Activated naive CD4-positive, alpha-beta T cell treated with anti-CD3 and anti-CD28 coated beads, Interleukin-2, amount 10 ng/mL, durations not matched to agents 7 days and 5 days (primary cell): ENCODE measurements at regions of chr9 and their contacts with region 1.

Region 1: DNA sequence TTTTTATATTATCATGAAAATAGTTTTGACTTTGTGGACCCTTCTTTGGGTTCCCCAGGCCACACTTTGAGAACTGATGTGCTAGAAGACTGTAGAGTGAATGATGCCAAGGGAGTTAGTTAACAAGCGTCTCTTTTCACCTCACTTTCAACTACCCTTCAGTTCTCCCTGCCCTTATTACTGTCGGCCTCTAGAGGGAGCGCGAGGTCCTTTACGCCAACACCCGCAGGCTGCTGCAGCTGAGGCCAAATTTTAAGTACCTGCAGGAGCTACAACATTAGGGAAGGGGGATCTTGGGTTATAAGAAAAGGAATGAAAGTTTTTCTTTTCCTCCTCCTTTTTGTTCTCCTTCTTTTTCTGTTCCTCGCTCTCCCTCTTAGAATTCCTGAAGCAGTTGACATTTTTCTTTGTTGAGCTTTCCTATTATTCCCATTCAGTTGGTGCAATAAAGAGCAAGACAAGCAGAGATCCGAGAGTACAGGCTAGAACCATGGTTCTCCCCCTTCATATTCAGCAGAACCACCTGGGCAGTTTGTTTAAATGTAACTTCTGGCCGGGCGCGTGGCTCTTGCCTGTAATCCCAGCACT is 84.0 kb downstream of the ZFAND5 start:
- DNase-seq: peak; percentile 77
- H3K4me3 Mint-ChIP-seq: no peak overlapping the region
- H3K27ac Mint-ChIP-seq: no peak overlapping the region
- H3K4me1 Mint-ChIP-seq: no peaks in the 10 kb centered on the region
- H3K27me3 Mint-ChIP-seq: no peaks in the 10 kb centered on the region

Region 2: DNA sequence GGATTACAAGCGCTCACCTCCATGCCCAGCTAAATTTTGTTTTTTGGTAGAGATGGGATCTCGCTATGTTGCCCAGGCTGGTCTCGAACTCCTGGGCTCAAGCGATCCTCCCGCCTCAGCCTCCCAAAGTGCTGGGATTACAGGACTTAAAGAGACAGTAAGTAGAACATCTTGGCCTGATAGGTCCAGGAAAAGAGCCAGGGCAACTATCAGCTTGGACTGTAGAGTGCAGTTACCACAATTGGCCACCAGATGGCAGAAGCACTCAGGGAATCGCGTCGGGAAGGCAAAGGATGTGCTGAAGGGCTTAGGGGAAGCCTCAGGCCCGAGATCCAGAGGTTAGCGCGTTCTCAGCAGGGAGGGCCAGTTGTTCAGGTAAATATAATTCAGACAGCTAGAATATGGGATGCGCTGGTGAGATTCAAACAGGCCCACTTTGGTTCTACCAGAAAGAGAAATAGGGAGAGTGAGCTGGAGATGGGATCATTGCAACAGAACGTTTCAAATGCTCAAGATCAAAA is 242.1 kb before region 1 on chr9:
- CTCF ChIA-PET with region 1: interaction called, 20 read pairs
- DNase-seq: peak; percentile 72
- H3K4me3 Mint-ChIP-seq: no peak overlapping the region
- H3K27ac Mint-ChIP-seq: no peak overlapping the region
- H3K4me1 Mint-ChIP-seq: peaks cover 3% of the 10 kb centered on the region
- H3K27me3 Mint-ChIP-seq: peaks cover 28% of the 10 kb centered on the region

Region 3: DNA sequence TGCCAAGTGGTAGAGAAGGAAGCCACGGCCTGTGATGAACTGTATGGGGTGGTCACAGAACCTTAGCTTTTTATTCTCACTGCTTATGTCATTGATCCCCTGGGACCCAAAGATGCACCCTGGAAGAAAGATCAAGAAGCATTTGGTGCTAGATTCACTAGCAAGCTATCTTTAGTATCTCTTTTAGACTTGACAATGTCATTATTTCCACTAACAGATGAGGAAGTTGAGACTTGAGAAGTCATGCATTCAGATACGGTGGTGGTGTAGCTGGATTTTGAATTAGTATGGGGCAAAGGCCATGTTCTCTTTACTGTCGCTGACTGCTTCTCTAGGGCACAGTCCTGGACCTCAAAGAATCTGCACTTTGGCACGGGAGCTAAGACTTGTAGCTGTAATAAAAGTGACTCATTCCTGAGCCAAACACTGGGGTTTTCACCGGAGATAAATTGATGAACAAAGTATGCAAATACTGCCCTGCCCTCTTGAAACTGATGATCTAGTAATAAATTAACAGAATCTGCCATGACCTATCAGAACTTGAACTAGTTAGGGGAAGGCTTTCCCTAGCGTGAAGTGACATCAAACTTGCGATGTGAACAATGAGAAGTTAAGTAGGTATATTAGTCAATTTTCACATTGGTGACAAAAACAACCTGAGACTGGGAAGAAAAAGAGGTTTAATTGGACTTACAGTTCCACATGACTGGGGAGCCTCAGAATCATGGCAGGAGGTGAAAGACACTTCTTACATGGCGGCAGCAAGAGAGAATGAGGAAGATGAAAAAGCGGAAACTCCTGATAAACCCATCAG is 126.3 kb before region 1 on chr9:
- CTCF ChIA-PET with region 1: no interaction called
- DNase-seq: no peak
- H3K4me3 Mint-ChIP-seq: no peak overlapping the region
- H3K27ac Mint-ChIP-seq: no peak overlapping the region
- H3K4me1 Mint-ChIP-seq: no peaks in the 10 kb centered on the region
- H3K27me3 Mint-ChIP-seq: peaks cover 12% of the 10 kb centered on the region

Region 4: DNA sequence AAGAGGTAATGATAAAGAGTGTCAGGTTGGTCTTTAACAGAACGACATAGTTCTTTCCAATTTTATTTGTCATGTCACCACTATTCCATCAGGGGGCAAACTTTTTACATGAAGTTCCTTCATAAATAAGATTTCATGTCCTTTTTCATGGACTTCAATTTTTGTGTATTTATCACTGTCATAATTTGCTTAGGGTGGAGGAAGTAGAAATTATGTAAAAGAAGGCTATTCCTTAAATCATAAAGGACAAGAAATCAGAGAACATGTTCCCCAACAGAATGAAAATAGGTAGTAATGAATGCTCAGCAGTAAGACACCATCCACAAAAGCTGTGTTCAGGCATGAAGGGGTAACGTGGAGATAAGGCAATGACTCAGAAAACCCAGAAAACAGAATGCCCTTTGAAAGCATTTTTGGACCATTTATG is 11.3 kb after region 1 on chr9:
- CTCF ChIA-PET with region 1: interaction called, 35 read pairs
- DNase-seq: no peak
- H3K4me3 Mint-ChIP-seq: no peak overlapping the region
- H3K27ac Mint-ChIP-seq: no peak overlapping the region
- H3K4me1 Mint-ChIP-seq: peaks cover 3% of the 10 kb centered on the region
- H3K27me3 Mint-ChIP-seq: peaks cover 20% of the 10 kb centered on the region

Region 5: GRCh38 chr9:72592502-72593403 is 311.7 kb after region 1 on chr9:
- CTCF ChIA-PET with region 1: interaction called, 20 read pairs
- DNase-seq: peak; percentile 24
- H3K4me3 Mint-ChIP-seq: no peak overlapping the region
- H3K27ac Mint-ChIP-seq: no peak overlapping the region
- H3K4me1 Mint-ChIP-seq: peaks cover 20% of the 10 kb centered on the region
- H3K27me3 Mint-ChIP-seq: peaks cover 18% of the 10 kb centered on the region

Region 6: GRCh38 chr9:72753266-72753893 is 472.4 kb after region 1 on chr9:
- CTCF ChIA-PET with region 1: interaction called, 21 read pairs
- DNase-seq: no peak
- H3K4me3 Mint-ChIP-seq: no peak overlapping the region
- H3K27ac Mint-ChIP-seq: no peak overlapping the region
- H3K4me1 Mint-ChIP-seq: no peaks in the 10 kb centered on the region
- H3K27me3 Mint-ChIP-seq: peaks cover 3% of the 10 kb centered on the region

Region 7: DNA sequence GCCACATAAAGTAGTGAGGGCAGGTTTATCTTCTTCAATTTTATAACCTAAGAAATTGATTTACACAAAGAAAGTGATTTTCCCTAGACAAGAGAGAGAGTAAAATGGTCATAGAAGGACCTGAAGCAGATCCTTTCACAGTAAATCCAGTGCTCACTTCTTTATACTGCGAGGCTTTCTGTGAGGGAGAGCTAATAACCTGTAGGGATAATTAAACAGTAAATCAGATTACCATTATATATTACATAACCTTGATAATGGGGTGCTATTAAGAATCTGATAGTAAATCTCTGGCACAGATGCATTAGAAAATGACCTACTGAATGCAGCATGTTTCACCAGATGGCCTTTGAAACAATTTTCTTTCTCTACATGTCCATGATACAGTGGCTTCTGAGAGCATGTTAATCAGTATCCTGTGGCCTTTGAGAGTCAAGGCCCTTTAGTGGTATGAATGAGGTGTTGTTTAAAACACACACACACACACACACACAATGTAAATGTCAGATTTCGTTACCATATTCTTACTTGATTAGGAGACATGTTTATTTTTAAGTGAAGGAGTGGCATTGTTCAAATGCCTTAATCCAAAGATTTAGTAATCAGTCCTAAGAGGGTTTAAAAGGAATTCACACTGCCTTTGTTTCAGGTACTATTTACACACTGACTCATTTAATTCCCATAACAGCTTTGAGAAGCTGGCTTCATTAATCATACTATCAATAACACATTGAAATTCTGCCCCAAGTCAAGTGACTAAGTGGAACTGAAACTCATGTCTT is 547.1 kb after region 1 on chr9:
- CTCF ChIA-PET with region 1: interaction called, 50 read pairs
- DNase-seq: no peak
- H3K4me3 Mint-ChIP-seq: no peak overlapping the region
- H3K27ac Mint-ChIP-seq: no peak overlapping the region
- H3K4me1 Mint-ChIP-seq: no peaks in the 10 kb centered on the region
- H3K27me3 Mint-ChIP-seq: peaks cover 4% of the 10 kb centered on the region